ENCODE measurements at regions of chr9 and their contacts with region 1.

Region 1: DNA sequence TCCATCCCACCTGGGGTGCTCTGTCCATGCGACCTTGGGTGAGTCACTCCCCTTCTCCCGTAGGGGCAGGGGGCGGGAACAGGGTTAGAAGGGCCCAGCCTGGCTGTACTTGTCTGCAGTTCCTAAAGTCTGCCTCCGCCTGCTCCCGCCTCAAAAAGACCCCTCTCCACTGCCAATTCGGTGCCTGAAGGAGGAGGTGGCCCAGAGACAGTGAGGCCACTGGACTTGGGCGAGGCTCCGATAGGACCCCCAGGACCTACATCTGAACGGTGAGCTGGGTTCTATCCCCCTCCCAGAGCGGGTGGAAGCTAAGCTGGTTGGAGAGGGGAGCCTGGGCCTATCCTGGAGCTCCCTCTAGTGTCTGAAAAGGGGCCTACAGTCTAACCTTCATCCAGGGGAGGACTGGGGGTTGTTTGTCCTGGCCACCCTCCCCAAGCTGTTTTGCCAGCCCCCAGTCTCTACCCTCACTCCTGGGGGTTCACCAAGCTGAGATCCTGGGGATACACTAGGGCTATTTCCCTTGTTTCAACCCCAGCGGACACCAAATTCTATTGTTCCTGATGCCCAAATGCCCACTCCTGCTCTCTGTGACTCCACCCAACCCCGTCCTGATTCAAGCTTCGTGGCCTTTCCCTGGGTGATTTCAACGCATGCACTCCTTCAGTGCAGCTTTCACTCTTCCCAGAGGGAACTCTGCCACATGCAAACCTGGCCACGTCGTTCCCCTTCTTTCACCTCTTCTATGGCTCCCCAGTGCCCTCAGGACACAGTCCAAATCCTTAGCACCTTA is 6.1 kb upstream of the CRB2 start:
- DNase-seq: peak; percentile 77
- H3K4me3 Mint-ChIP-seq: no peak overlapping the region
- H3K27ac Mint-ChIP-seq: no peak overlapping the region
- H3K4me1 Mint-ChIP-seq: peaks cover 3% of the 10 kb centered on the region
- H3K27me3 Mint-ChIP-seq: peaks cover 10% of the 10 kb centered on the region

Region 2: GRCh38 chr9:122125158-122125508 is 1224.8 kb before region 1 on chr9:
- CTCF ChIA-PET with region 1: no interaction called
- intact Hi-C with region 1: loop called (anchors 10 kb)
- DNase-seq: peak; percentile 84
- H3K4me3 Mint-ChIP-seq: no peak overlapping the region
- H3K27ac Mint-ChIP-seq: no peak overlapping the region
- H3K4me1 Mint-ChIP-seq: peaks cover 11% of the 10 kb centered on the region
- H3K27me3 Mint-ChIP-seq: peaks cover 22% of the 10 kb centered on the region

Region 3: DNA sequence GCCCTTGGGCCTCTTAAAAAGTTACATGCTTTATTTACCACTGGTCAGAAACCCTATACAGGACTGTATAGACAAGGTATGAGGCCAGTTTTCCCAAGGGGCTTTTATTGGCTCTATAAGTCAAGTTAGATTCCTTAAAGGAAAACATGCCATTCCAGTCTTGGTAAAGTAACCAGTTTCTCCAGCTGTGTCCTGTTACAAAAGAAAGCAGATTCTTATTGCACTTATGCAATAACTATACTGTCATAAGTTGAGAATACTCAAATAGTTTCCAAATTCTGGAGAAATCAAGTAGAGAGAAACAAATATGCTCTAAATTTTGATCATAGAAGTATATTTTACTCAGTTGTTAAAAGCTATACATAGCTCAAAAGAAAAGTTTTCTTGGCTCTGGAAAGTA is 931.9 kb before region 1 on chr9:
- CTCF ChIA-PET with region 1: no interaction called
- intact Hi-C with region 1: no loop called
- DNase-seq: no peak
- H3K4me3 Mint-ChIP-seq: no peak overlapping the region
- H3K27ac Mint-ChIP-seq: no peak overlapping the region
- H3K4me1 Mint-ChIP-seq: no peaks in the 10 kb centered on the region
- H3K27me3 Mint-ChIP-seq: peaks cover 23% of the 10 kb centered on the region

Region 4: GRCh38 chr9:122656378-122656777 is 693.5 kb before region 1 on chr9:
- CTCF ChIA-PET with region 1: no interaction called
- intact Hi-C with region 1: no loop called
- DNase-seq: no peak
- H3K4me3 Mint-ChIP-seq: no peak overlapping the region
- H3K27ac Mint-ChIP-seq: no peak overlapping the region
- H3K4me1 Mint-ChIP-seq: no peaks in the 10 kb centered on the region
- H3K27me3 Mint-ChIP-seq: peaks cover 7% of the 10 kb centered on the region

Region 5: DNA sequence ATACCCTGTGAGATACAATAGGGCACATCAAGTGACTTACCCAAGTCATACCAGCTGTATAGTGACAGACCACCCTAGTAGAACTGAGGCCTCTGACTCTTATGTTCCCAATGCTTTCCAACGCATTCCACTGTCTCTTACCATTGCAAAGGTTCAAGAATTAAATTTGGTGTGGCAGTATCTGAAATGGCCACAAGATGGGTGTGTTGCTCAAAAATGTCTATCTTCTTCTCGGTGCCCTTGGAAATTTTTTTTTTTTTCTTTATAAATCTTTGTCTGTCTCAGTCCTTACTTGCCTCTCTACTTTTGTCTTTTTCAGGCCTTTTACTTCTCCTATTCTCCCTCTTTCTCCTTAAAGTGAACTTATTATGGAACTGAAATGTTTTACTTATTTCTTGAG is 268.1 kb before region 1 on chr9:
- CTCF ChIA-PET with region 1: interaction called, 35 read pairs
- intact Hi-C with region 1: loop called (anchors 1 kb)
- DNase-seq: peak; percentile 34
- H3K4me3 Mint-ChIP-seq: no peak overlapping the region
- H3K27ac Mint-ChIP-seq: no peak overlapping the region
- H3K4me1 Mint-ChIP-seq: no peaks in the 10 kb centered on the region
- H3K27me3 Mint-ChIP-seq: no peaks in the 10 kb centered on the region

Region 6: GRCh38 chr9:123119566-123119965 is 230.3 kb before region 1 on chr9:
- CTCF ChIA-PET with region 1: interaction called, 10 read pairs
- intact Hi-C with region 1: no loop called
- DNase-seq: no peak
- H3K4me3 Mint-ChIP-seq: no peak overlapping the region
- H3K27ac Mint-ChIP-seq: no peak overlapping the region
- H3K4me1 Mint-ChIP-seq: peaks cover 10% of the 10 kb centered on the region
- H3K27me3 Mint-ChIP-seq: no peaks in the 10 kb centered on the region

Region 7: GRCh38 chr9:123360161-123361085 is 10.5 kb after region 1 on chr9:
- CTCF ChIA-PET with region 1: interaction called, 10 read pairs
- intact Hi-C with region 1: no loop called
- DNase-seq: peak; percentile 38
- H3K4me3 Mint-ChIP-seq: no peak overlapping the region
- H3K27ac Mint-ChIP-seq: no peak overlapping the region
- H3K4me1 Mint-ChIP-seq: peaks cover 3% of the 10 kb centered on the region
- H3K27me3 Mint-ChIP-seq: peaks cover 2% of the 10 kb centered on the region

Region 8: GRCh38 chr9:123401879-123402513 is 52.1 kb after region 1 on chr9:
- CTCF ChIA-PET with region 1: interaction called, 4 read pairs
- intact Hi-C with region 1: loop called (anchors 1 kb)
- DNase-seq: peak; percentile 28
- H3K4me3 Mint-ChIP-seq: no peak overlapping the region
- H3K27ac Mint-ChIP-seq: no peak overlapping the region
- H3K4me1 Mint-ChIP-seq: peaks cover 7% of the 10 kb centered on the region
- H3K27me3 Mint-ChIP-seq: no peaks in the 10 kb centered on the region

Measured in activated naive CD4-positive, alpha-beta T cell treated with anti-CD3 and anti-CD28 coated beads for 36 hours (primary cell).